A673 (cell line): ENCODE measurements at regions of chr22 and their contacts with region 1.

Region 1: GRCh38 chr22:24175160-24175808 is 6.0 kb upstream of the SUSD2 start:
- DNase-seq: peak; percentile 75
- H3K4me3 ChIP-seq: no peak overlapping the region
- H3K27ac ChIP-seq: no peak overlapping the region
- H3K4me1 ChIP-seq: no peaks in the 10 kb centered on the region
- H3K27me3 ChIP-seq: no peaks in the 10 kb centered on the region
- CTCF ChIP-seq: peak; percentile 75

Region 2: GRCh38 chr22:23913661-23914353 is 261.5 kb before region 1 on chr22:
- CTCF ChIA-PET with region 1: interaction called, 11 read pairs
- POLR2A ChIA-PET with region 1: no interaction called
- intact Hi-C with region 1: no loop called
- DNase-seq: peak; percentile 100
- H3K4me3 ChIP-seq: peak overlapping the region; percentile 52
- H3K27ac ChIP-seq: peak overlapping the region; percentile 95
- H3K4me1 ChIP-seq: peaks cover 44% of the 10 kb centered on the region
- H3K27me3 ChIP-seq: no peaks in the 10 kb centered on the region
- CTCF ChIP-seq: no peak

Region 3: DNA sequence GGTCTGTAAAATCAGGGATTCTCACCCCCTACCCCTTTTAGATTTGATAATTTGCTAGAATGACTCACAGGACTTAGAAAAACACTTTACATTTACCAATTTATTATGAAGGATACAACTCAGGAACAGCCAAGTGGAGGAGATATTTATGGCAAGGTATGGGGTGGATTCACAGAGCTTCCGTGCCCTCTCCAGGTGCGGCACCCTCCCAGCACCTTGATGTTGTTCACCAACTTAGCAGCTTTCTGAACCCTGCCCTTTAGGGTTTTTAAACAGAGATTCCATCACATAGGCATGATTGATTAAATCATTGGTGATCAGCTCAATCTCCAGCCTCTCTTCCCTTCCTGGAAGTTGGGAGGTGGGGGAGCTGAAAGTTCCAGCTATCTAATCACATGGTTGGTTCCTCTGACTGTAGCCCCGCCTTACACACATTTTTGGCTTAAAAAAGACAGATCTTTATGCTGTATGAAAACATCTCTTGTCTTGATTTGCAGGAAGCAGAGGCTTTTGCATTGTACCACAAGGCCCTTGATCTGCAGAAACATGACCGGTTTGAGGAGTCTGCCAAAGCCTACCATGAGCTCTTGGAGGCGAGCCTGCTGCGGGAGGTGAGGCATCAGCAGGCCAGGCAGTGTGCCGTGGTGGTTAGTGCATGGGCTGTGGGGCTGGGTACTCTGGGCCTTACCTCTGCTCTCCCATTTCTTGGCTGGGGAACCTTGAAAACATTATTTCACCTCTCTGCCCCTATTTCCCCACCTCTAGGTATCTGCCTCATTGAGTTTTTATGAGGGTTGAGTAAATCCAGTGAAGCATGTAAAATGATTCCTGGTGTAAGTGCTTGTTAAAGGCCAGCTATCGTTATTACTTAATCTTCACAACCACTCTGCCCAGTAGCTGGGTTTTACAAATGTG is 137.2 kb before region 1 on chr22:
- CTCF ChIA-PET with region 1: no interaction called
- POLR2A ChIA-PET with region 1: no interaction called
- intact Hi-C with region 1: no loop called
- DNase-seq: no peak
- H3K4me3 ChIP-seq: no peak overlapping the region
- H3K27ac ChIP-seq: no peak overlapping the region
- H3K4me1 ChIP-seq: no peaks in the 10 kb centered on the region
- H3K27me3 ChIP-seq: no peaks in the 10 kb centered on the region
- CTCF ChIP-seq: no peak

Region 4: GRCh38 chr22:24106385-24107381 is 68.6 kb before region 1 on chr22:
- CTCF ChIA-PET with region 1: no interaction called
- POLR2A ChIA-PET with region 1: no interaction called
- intact Hi-C with region 1: loop called (anchors 2 kb)
- DNase-seq: peak; percentile 9
- H3K4me3 ChIP-seq: no peak overlapping the region
- H3K27ac ChIP-seq: no peak overlapping the region
- H3K4me1 ChIP-seq: no peaks in the 10 kb centered on the region
- H3K27me3 ChIP-seq: no peaks in the 10 kb centered on the region
- CTCF ChIP-seq: peak; percentile 31; the same call in 1 of the 2 replicates